PC-9 (cell line): ENCODE measurements at regions of chr17 and their contacts with region 1.

Region 1: DNA sequence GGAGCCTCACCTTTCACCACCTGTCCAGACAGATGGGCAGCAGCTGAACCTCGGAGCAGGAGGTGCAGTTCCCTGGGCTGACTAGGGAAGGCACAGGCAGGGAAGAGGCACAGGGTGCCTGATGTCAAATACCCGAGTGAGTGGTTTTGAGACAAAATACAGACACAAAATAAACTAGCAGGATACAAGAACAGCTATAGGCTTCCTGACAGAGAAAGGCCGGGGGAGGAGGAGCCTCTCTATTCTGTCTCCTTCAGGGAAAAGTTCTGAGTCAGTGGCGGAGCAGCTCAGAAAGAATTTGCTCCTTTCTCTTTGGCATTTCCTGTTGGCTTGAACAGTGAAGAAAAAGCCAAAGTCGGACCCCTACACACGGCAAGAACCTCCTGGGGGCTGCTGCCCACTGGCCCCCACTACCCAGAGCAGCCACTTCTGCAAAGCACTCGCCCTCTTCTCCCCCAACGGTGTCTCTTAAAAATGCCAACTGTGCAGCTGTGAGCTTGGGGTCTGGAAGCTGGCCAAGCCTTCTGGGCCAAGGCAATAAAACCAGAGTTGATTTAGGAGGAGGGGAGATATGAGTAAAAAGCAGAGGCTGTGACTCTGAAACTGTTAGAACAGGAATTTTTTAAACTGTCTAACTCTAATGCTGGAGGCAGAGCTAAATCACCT is 14.4 kb upstream of the FAAP100 start:
- DNase-seq: peak; percentile 74 to 81
- H3K4me3 ChIP-seq: peak overlapping the region; percentile 34; the same call in 1 of the 2 replicates
- H3K27ac ChIP-seq: peak overlapping the region; percentile 63
- H3K4me1 ChIP-seq: peaks cover 47% of the 10 kb centered on the region
- H3K27me3 ChIP-seq: no peaks in the 10 kb centered on the region
- CTCF ChIP-seq: no peak

Region 2: DNA sequence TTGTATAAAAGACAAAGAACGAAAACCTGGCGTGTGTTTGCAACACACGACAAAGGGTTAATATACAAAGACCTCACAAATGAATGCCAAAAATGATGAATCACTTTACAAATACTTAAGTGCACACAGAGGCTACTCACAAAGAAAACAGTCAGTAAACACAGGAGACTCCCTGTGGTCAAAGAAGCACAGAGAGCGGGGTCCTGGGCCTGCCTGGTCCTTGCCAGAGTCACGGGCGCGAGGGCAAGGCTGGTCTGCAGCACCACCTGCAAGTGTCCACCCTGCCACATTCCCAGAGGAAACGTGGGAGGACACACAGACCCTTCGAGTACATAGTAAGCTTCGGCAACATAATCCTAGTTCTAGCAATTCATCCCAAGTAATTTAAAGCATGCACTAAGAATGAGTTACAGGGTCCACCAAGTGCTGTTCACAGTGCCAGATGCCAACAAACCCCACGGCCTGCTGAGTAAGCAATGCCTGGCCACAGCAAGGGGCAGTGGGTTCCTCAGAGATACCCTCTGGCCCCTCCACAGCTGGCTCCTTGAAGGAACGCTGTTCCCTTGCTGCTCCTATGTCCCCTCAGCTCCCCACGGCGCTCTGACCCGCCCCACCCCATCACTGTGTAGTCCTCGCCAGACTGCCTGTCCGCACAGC is 10.2 kb after region 1 on chr17:
- CTCF ChIA-PET with region 1: interaction called, 3 read pairs
- POLR2A ChIA-PET with region 1: interaction called, 5 read pairs
- intact Hi-C with region 1: loop called (anchors 1 kb)
- DNase-seq: peak; percentile 79 to 84
- H3K4me3 ChIP-seq: peak overlapping the region; percentile 40; the same call in 1 of the 2 replicates
- H3K27ac ChIP-seq: peak overlapping the region; percentile 64
- H3K4me1 ChIP-seq: peaks cover 33% of the 10 kb centered on the region
- H3K27me3 ChIP-seq: no peaks in the 10 kb centered on the region
- CTCF ChIP-seq: no peak